PC-9 (cell line): ENCODE measurements at regions of chr10 and their contacts with region 1.

Region 1: DNA sequence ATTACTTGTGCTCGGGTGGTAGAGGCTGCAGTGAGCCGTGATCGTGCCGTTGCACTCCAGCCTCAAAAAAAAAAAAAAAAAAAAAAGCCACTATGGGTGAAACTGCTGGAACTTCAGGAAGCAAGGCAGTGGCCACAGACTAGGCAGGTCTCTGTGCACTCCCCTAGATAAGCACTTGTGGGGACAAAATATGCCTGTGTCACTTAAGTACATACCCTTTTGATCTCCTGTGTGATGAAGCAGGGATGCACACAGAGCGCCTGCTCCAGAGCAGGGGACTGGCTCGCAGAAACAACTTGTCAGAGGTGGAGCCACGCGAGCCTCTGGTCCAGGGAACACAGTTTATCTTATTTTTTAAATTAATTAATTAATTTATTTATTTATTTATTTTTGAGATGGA is 42.9 kb upstream of the PSAP start:
- DNase-seq: no peak
- H3K4me3 ChIP-seq: no peak overlapping the region
- H3K27ac ChIP-seq: no peak overlapping the region
- H3K4me1 ChIP-seq: peaks cover 16% of the 10 kb centered on the region
- H3K27me3 ChIP-seq: no peaks in the 10 kb centered on the region
- CTCF ChIP-seq: no peak

Region 2: DNA sequence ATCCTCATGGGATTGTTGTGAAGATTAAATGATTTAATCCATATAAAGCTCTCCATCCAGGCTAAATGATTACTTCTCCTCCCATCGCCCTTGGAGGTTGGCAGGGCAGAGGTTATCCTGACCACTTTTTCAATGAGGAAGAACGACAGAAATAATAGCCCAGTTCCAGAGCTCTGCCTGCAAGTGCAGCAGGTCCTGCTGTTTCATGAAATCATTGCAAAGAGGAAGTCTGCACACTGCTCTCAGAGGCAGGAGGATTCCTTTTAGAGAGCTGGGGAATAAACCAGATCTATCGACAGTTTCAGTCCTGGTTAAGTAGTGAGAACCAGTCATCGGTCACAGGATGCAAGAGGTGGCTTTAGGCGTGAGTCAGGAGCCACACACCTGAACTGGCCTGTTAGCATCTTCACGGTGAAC is 522.2 kb before region 1 on chr10:
- CTCF ChIA-PET with region 1: interaction called, 11 read pairs
- POLR2A ChIA-PET with region 1: no interaction called
- intact Hi-C with region 1: no loop called
- DNase-seq: no peak
- H3K4me3 ChIP-seq: no peak overlapping the region
- H3K27ac ChIP-seq: no peak overlapping the region
- H3K4me1 ChIP-seq: peaks cover 30% of the 10 kb centered on the region
- H3K27me3 ChIP-seq: no peaks in the 10 kb centered on the region
- CTCF ChIP-seq: no peak

Region 3: DNA sequence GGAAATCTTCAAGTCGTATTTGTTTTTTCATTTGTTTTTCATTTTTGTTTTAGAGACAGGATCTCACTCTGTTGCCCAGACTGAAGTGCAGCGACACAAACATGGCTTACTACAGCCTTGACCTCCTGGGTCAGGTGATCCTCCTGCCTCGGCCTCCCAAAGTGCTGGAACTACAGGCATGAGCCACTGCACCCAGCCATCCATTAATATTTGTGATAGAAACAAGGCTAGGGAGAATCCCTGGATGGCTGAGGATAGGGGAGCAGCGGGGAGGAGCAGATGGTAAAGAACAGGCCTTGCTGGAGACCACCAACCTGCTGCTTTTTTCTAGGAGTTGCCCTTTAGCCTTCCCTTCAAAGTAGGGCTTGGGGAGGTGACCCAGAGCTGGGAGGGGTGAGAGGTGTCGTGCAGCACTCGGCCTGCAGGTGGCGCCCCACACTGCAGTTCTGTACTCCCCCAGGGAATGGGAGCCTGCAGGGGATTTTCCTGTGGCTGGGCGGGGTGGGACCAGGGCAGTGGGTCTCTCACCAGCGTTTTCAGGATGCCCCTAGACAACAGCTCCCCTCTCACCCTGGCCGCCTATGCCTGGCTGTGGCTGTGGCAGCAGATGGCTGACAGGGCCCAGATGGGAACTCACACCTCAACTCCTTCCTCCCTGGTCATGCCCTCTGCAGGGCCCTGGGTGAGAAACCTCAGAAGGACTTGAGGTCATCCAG is 509.8 kb before region 1 on chr10:
- CTCF ChIA-PET with region 1: interaction called, 5 read pairs
- POLR2A ChIA-PET with region 1: no interaction called
- intact Hi-C with region 1: loop called (anchors 1 kb)
- DNase-seq: peak in 1 of 2 experiments; percentile 77
- H3K4me3 ChIP-seq: no peak overlapping the region
- H3K27ac ChIP-seq: no peak overlapping the region
- H3K4me1 ChIP-seq: peaks cover 8% of the 10 kb centered on the region
- H3K27me3 ChIP-seq: no peaks in the 10 kb centered on the region
- CTCF ChIP-seq: peak; percentile 98

Region 4: GRCh38 chr10:72337020-72337629 is 443.2 kb after region 1 on chr10:
- CTCF ChIA-PET with region 1: interaction called, 3 read pairs
- POLR2A ChIA-PET with region 1: no interaction called
- intact Hi-C with region 1: loop called (anchors 1 kb)
- DNase-seq: peak; percentile 52 to 84
- H3K4me3 ChIP-seq: no peak overlapping the region
- H3K27ac ChIP-seq: no peak overlapping the region
- H3K4me1 ChIP-seq: peaks cover 22% of the 10 kb centered on the region
- H3K27me3 ChIP-seq: no peaks in the 10 kb centered on the region
- CTCF ChIP-seq: peak; percentile 99